Caco-2 (cell line): ENCODE measurements at regions of chr15 and their contacts with region 1.

Region 1: GRCh38 chr15:77186594-77187011 is 115.7 kb upstream of the TSPAN3 start:
- DNase-seq: no peak
- H3K4me3 ChIP-seq: no peak overlapping the region
- H3K4me3 Mint-ChIP-seq: no peak overlapping the region
- H3K27ac Mint-ChIP-seq: peak overlapping the region; percentile 25
- H3K4me1 ChIP-seq: peaks cover 28% of the 10 kb centered on the region
- H3K4me1 Mint-ChIP-seq: peaks cover 14% of the 10 kb centered on the region
- H3K27me3 ChIP-seq: no peaks in the 10 kb centered on the region
- H3K27me3 Mint-ChIP-seq: no peaks in the 10 kb centered on the region
- CTCF ChIP-seq: peak; percentile 43 to 44

Region 2: GRCh38 chr15:77118882-77119321 is 67.7 kb before region 1 on chr15:
- CTCF ChIA-PET with region 1: interaction called, 3 read pairs
- POLR2A ChIA-PET with region 1: no interaction called
- intact Hi-C with region 1: loop called (anchors 2 kb)
- DNase-seq: peak in 1 of 2 experiments; percentile 51
- H3K4me3 ChIP-seq: no peak overlapping the region
- H3K4me3 Mint-ChIP-seq: no peak overlapping the region
- H3K27ac Mint-ChIP-seq: no peak overlapping the region
- H3K4me1 ChIP-seq: no peaks in the 10 kb centered on the region
- H3K4me1 Mint-ChIP-seq: no peaks in the 10 kb centered on the region
- H3K27me3 ChIP-seq: no peaks in the 10 kb centered on the region
- H3K27me3 Mint-ChIP-seq: no peaks in the 10 kb centered on the region
- CTCF ChIP-seq: peak; percentile 53 to 78

Region 3: DNA sequence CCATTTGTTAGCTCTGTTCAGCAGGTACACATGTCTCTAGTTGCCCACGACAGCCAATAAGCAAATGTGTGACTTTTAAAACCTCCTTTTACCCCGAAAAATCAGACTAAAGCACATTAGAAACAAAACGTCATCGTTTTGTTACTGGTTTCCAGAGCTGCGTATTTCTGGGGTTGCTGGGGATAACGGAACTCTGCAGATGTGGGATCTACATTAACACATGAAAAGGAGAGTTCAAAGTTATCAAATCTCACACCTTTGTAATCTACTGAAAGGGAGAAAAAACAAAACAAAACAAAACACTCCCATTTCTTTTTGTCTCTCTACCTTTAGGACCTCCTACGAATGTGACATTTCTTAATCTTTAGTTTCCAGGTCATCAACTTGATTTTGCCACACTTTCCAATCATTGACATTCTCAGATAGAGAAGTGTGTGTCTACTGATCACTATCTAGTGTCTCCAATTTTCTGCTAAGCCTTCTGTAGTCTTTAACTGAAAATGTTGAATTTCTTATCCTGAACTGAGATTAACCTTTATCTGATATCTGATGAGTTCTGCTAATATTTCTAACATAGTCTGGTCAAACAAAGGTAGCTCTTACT is 22.7 kb before region 1 on chr15:
- CTCF ChIA-PET with region 1: interaction called, 3 read pairs
- POLR2A ChIA-PET with region 1: no interaction called
- intact Hi-C with region 1: loop called (anchors 2 kb)
- DNase-seq: no peak
- H3K4me3 ChIP-seq: no peak overlapping the region
- H3K4me3 Mint-ChIP-seq: no peak overlapping the region
- H3K27ac Mint-ChIP-seq: no peak overlapping the region
- H3K4me1 ChIP-seq: peaks cover 34% of the 10 kb centered on the region
- H3K4me1 Mint-ChIP-seq: peaks cover 13% of the 10 kb centered on the region
- H3K27me3 ChIP-seq: no peaks in the 10 kb centered on the region
- H3K27me3 Mint-ChIP-seq: no peaks in the 10 kb centered on the region
- CTCF ChIP-seq: no peak